ENCODE measurements at regions of chr1 and their contacts with region 1.

Region 1: GRCh38 chr1:90580176-90580575 is 136.9 kb downstream of the BARHL2 start:
- DNase-seq: peak; percentile 29
- H3K4me3 ChIP-seq: no peak overlapping the region
- H3K27ac ChIP-seq: no peak overlapping the region
- H3K4me1 ChIP-seq: no peaks in the 10 kb centered on the region
- H3K27me3 ChIP-seq: no peaks in the 10 kb centered on the region
- CTCF ChIP-seq: no peak
- POLR2A ChIP-seq: no peak

Region 2: GRCh38 chr1:90616395-90616794 is 36.2 kb after region 1 on chr1:
- intact Hi-C with region 1: no loop called
- DNase-seq: no peak
- H3K4me3 ChIP-seq: no peak overlapping the region
- H3K27ac ChIP-seq: no peak overlapping the region
- H3K4me1 ChIP-seq: no peaks in the 10 kb centered on the region
- H3K27me3 ChIP-seq: no peaks in the 10 kb centered on the region
- CTCF ChIP-seq: no peak
- POLR2A ChIP-seq: no peak

Region 3: GRCh38 chr1:91165033-91165654 is 585.0 kb after region 1 on chr1:
- intact Hi-C with region 1: loop called (anchors 10 kb)
- DNase-seq: peak; percentile 62
- H3K4me3 ChIP-seq: no peak overlapping the region
- H3K27ac ChIP-seq: no peak overlapping the region
- H3K4me1 ChIP-seq: no peaks in the 10 kb centered on the region
- H3K27me3 ChIP-seq: no peaks in the 10 kb centered on the region
- CTCF ChIP-seq: peak in 3 of 4 experiments; percentile 80 to 87 (median 86)
- POLR2A ChIP-seq: no peak